A673 (cell line): ENCODE measurements at regions of chr10 and their contacts with region 1.

Region 1: DNA sequence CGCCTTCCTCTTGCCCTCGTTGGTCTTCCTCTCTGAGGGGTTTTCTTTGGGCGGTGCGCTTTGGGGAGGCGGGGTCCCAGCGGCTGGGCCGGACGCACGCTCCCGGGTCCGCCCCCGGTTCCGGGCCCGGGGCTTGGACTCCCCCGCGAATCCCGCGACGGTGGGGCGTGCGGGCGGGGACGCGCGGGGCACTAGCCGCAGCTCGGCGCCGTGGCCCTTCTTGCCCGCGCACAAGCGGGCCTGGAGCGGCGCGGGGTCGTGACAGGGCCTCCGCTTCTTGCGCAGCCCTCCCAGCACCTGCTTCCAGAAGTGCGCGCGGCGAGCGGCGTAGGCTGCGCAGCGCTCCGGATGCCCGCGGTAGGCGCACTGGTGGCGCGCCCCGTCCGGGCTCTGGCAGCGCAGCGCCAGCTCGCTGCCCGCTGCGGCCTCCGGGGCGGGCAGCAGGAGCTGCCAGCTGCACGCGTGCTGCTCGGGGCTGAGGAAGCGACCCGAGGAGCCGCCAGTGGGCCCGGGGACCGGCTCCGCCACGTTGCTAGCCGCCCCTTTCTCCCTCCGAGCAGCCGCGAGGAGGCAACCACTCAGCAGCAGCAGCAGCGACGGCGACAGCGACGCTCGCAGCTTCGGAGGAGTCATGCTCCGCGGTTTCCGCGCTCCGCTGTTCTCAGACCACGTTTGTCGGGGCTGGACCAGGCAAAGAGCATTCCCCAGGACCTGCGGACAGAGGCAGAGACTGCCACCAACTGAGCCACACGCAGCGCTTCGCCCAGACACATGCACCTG is 759 bp downstream of the FGFBP3 start:
- DNase-seq: peak; percentile 91
- H3K4me3 ChIP-seq: peak overlapping the region; percentile 82
- H3K27ac ChIP-seq: peak overlapping the region; percentile 66
- H3K4me1 ChIP-seq: peaks cover 15% of the 10 kb centered on the region
- H3K27me3 ChIP-seq: no peaks in the 10 kb centered on the region
- CTCF ChIP-seq: peak; percentile 75

Region 2: DNA sequence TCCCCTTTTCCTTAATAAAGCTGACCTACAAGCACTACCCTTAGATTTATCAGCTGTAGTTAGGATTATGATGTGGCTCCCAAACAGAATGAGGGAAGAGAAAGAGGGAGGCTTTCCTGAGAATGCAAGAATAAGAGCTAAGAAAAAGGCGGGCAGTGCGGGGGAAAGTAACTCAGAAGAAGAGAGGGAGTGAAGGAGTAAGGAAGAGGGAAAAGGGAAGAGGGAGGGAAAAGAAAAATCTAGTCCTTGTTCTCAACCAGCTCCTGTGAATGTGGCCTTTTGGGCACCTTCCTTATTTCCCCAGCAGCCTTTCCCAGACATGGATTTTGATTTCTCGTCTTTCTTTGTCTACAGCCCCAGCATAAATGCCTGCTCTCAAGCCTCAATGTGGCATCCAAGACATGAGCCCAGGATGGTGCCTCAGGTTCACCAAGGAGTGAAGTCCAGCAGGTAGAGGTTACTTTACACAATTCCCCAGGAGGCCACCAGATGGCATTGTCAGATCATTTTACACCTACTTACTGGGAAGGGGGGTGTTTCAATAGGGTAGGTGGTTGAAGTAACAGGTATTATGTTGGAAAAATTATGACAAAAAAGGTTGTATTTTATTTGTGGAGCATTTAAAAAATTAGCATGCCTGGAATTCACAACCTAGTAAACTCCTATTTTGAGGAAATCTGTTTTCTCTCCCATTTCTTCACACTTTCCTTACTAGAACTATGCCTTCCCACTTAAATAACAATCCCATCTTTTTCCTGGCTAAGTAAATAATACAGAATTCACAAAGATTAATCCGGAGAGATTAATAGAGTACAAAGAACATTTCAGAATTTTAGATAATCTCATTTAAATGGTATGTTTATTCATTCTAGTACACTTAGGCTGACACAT is 1157.2 kb before region 1 on chr10:
- CTCF ChIA-PET with region 1: no interaction called
- POLR2A ChIA-PET with region 1: no interaction called
- intact Hi-C with region 1: loop called (anchors 10 kb)
- DNase-seq: peak; percentile 22
- H3K4me3 ChIP-seq: no peak overlapping the region
- H3K27ac ChIP-seq: no peak overlapping the region
- H3K4me1 ChIP-seq: no peaks in the 10 kb centered on the region
- H3K27me3 ChIP-seq: peaks cover 75% of the 10 kb centered on the region
- CTCF ChIP-seq: peak; percentile 76

Region 3: GRCh38 chr10:91298224-91298871 is 610.2 kb before region 1 on chr10:
- CTCF ChIA-PET with region 1: interaction called, 3 read pairs
- POLR2A ChIA-PET with region 1: no interaction called
- intact Hi-C with region 1: loop called (anchors 2 kb)
- DNase-seq: peak; percentile 86
- H3K4me3 ChIP-seq: peak overlapping the region; percentile 45
- H3K27ac ChIP-seq: no peak overlapping the region
- H3K4me1 ChIP-seq: peaks cover 10% of the 10 kb centered on the region
- H3K27me3 ChIP-seq: no peaks in the 10 kb centered on the region
- CTCF ChIP-seq: peak; percentile 93

Region 4: GRCh38 chr10:91409869-91410637 is 498.5 kb before region 1 on chr10 and contains the start of gene HECTD2:
- CTCF ChIA-PET with region 1: no interaction called
- POLR2A ChIA-PET with region 1: interaction called, 4 read pairs
- intact Hi-C with region 1: loop called (anchors 10 kb)
- DNase-seq: peak; percentile 88
- H3K4me3 ChIP-seq: peak within 1 kb of the TSS; percentile 80
- H3K27ac ChIP-seq: peak within 1 kb of the TSS; percentile 99
- H3K4me1 ChIP-seq: peaks cover 41% of the 10 kb centered on the region
- H3K27me3 ChIP-seq: no peaks in the 10 kb centered on the region
- CTCF ChIP-seq: no peak; the same call in 1 of the 2 replicates
- total RNA-seq, gene HECTD2: 15.1 and 20.9 TPM in 2 replicates

Region 5: GRCh38 chr10:91551856-91552255 is 356.7 kb before region 1 on chr10:
- CTCF ChIA-PET with region 1: no interaction called
- POLR2A ChIA-PET with region 1: no interaction called
- intact Hi-C with region 1: loop called (anchors 5 kb)
- DNase-seq: peak; percentile 78
- H3K4me3 ChIP-seq: no peak overlapping the region
- H3K27ac ChIP-seq: no peak overlapping the region
- H3K4me1 ChIP-seq: peaks cover 3% of the 10 kb centered on the region
- H3K27me3 ChIP-seq: no peaks in the 10 kb centered on the region
- CTCF ChIP-seq: peak; percentile 94

Region 6: GRCh38 chr10:91768123-91768522 is 140.4 kb before region 1 on chr10:
- CTCF ChIA-PET with region 1: no interaction called
- POLR2A ChIA-PET with region 1: no interaction called
- intact Hi-C with region 1: no loop called
- DNase-seq: no peak
- H3K4me3 ChIP-seq: no peak overlapping the region
- H3K27ac ChIP-seq: no peak overlapping the region
- H3K4me1 ChIP-seq: no peaks in the 10 kb centered on the region
- H3K27me3 ChIP-seq: no peaks in the 10 kb centered on the region
- CTCF ChIP-seq: no peak

Region 7: GRCh38 chr10:91820144-91820543 is 88.4 kb before region 1 on chr10:
- CTCF ChIA-PET with region 1: no interaction called
- POLR2A ChIA-PET with region 1: no interaction called
- intact Hi-C with region 1: no loop called
- DNase-seq: no peak
- H3K4me3 ChIP-seq: no peak overlapping the region
- H3K27ac ChIP-seq: no peak overlapping the region
- H3K4me1 ChIP-seq: no peaks in the 10 kb centered on the region
- H3K27me3 ChIP-seq: no peaks in the 10 kb centered on the region
- CTCF ChIP-seq: no peak

Region 8: DNA sequence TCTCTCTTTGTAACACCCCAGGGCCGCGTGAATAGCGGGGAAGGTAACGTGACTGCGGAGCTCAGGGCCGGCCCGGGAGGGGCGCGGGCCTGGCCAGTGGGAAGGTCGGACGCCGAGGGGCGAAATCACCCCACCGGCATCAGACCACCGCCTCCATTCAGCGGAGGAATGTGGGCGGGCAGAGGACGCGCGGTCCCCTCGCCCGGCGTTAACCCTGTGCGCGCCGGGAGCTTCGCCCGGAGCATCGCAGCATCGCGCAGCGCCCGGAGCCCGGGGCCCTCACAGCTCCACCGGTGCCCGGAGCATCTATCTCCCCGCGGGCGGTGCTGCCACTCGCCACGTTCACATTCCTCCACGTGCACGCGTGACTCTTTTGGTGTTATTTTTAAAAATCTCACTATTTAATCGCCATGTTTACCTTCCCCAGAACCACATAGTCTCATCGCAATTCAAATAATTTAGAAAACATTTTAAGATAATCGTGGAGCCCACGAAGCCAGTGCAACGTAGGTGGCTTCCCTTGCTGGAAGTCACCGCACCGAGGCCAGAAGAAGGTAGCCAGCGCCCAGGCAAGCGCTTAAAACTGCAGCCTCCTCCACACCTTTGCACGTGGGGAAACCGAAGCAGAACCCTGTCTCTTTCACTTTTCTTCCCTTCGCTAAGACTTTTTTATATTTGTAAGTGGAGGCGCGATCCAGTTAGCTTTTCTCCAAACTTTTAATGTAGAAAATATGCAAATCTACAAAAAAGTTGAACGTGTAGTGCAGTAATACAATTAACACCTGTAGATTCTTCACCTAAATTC is 21.1 kb before region 1 on chr10:
- CTCF ChIA-PET with region 1: interaction called, 12 read pairs
- POLR2A ChIA-PET with region 1: interaction called, 3 read pairs
- intact Hi-C with region 1: no loop called
- DNase-seq: peak; percentile 49
- H3K4me3 ChIP-seq: peak overlapping the region; percentile 44
- H3K27ac ChIP-seq: no peak overlapping the region
- H3K4me1 ChIP-seq: peaks cover 25% of the 10 kb centered on the region
- H3K27me3 ChIP-seq: peaks cover 14% of the 10 kb centered on the region
- CTCF ChIP-seq: no peak

Region 9: DNA sequence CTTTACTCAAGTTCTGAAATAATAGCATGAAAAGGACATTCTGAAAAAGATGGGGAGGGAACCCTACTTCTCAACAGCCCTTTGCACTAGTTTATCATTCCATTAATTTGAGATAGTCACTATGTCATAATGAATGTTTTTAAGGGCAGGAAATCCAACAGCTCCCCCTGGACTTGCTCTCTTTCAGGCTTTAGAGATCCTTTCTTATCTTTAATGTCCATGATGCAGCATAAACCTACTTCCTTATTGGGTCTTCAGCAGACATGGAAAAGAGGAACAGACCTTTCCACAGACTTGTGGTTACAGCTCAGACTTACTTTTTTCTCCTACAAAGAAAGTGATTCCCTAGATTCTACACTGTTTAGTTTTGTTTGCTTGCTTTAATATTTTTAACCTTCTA is 578.1 kb after region 1 on chr10:
- CTCF ChIA-PET with region 1: no interaction called
- POLR2A ChIA-PET with region 1: no interaction called
- intact Hi-C with region 1: no loop called
- DNase-seq: no peak
- H3K4me3 ChIP-seq: no peak overlapping the region
- H3K27ac ChIP-seq: no peak overlapping the region
- H3K4me1 ChIP-seq: no peaks in the 10 kb centered on the region
- H3K27me3 ChIP-seq: no peaks in the 10 kb centered on the region
- CTCF ChIP-seq: no peak